ENCODE measurements at regions of chr12 and their contacts with region 1.

Region 1: DNA sequence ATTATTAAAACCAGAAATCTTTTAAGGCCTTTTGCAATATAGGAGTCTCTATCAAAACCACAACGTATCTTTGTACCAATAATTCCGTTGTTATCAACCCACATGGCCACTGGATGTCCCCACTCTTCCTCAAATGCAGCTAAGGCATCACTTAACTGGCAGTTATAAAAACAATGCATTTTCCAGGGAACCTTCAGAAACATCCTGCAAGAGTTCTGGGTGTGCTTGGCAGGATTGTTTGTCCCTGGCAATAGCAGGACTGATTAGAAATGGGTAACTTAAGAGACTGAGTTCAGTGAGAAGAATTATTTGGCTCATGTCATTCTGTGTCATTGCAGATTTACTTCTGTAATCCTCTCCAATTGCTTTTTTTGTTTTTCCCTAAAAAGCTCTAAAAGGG is 112.0 kb downstream of the SLC15A5 start:
- DNase-seq: no peak

Region 2: DNA sequence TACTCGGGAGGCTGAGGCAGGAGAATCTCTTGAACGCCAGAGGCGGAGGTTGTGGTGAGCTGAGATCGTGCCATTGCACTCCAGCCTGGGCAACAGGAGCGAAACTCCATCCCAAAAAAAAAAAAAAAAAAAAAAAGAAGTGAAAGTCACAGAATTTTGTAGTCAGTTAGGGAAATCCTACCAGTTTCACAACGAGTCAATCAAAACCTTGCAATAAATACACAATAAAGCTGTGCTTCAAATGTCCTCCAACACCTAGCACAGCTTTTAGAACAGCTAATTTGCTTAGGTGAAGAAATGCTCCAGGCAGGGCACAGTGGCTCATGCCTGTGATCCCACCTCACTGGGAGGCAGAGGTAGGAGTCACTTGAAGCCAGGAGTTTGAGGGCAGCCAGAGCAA is 1912.8 kb before region 1 on chr12:
- intact Hi-C with region 1: loop called in 1 of 2 experiments (anchors 5 kb)
- DNase-seq: no peak

Region 3: DNA sequence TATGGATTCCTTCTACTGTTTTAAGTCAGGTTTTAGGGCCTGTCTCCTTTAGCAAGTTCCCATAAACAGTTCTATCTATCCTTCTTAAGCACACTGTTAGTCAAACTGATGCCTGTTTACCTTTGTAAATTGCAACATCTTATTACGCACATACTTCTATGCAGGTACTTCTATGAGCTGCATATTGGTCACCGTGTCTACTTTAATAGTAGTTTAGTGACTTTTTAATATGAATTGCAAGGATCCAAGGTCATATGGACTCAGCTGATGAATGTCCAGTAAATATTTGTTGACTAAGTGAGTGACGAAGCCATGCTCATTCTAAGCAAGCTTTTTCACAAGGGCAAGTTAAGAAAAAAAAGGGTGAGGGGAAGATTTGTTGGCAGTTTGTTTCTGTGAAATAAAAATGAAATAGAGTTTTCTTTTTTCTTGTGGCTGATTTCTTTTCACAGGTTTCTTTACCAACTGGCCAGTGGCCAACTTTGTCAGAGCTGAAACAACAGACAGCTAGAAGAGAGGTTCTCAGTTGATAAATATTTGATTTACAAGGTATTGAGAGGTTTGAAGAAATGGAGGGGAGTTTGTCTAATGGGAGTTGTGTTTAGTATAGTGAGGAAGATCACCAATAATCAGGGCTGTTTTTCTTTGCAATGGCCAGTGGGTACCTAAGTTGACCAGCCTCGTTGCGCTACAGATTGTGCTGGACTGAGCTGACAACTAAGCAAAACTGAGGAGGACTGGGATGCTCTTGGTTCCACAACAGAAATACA is 29.1 kb before region 1 on chr12:
- intact Hi-C with region 1: no loop called
- DNase-seq: no peak

Region 4: DNA sequence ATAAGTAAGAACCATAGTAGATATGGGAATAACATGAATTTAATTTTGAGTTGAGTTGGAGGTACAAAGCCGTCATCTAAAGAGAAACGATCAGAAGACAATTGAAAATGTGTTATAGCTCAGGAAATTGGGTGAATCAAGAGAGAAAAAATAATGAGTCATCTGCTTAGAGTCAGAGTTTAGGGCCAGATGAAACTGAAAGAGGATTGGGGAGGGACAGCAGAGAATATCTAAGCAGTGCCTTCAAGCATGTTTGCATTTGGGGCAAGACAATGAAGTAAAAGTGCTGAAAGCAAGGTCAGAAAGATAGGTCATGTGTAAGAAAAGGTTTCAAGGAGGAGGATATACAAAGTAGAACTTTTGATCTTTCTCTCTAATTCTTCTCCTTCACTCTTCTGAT is 62.6 kb after region 1 on chr12:
- intact Hi-C with region 1: no loop called
- DNase-seq: no peak

Region 5: DNA sequence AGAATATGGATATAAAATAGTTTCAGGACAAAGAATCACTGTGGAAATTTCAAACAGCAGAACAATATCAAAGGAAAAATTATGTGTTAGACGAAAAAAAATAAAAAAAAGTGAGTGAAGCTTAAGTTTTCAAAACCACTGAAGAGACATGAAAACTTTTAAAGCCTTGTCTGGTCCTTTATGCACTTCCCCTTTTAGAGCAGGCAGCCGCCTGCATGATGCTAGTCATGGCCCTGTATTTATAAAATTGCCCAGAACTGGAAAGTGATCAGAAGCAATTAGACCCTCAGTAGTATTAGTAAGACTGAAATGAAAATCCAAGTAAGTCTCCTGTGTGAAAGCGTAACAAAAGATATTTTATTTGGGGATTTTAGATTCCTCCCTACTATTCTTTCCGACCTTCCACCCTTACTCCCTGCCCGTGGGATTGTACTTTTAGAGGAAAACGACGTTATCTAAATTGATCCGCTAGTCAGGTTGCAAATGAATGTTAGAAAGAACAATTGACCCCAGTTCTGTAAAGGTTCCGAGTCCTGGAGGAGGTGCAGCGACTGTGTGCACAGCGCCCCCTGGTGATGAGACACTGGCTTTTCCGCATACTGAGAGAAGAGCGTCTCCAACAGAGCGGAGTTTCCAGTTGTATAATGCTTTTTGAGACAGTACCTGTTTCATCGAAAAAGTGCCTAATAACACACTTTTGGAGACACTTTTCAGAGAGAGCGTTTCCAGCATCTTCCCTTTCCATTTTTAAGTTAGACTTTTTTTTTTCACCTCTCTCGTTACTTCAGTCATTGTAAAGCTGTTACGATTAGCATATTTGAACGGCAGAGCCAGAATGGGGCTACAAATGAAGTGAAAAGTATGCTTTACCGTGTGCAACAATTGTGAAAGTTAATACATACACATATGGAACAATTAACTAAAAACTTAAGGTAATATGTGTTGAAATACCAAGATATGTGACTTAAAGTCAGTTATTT is 194.3 kb after region 1 on chr12:
- intact Hi-C with region 1: loop called in 1 of 2 experiments (anchors 5 kb)
- DNase-seq: peak; percentile 86